ENCODE measurements at regions of chr6 and their contacts with region 1.

Region 1: GRCh38 chr6:41367700-41368099 is 32.3 kb downstream of the NCR2 start:
- DNase-seq: no peak
- H3K4me3 ChIP-seq: no peak overlapping the region
- CTCF ChIP-seq: peak; percentile 87

Region 2: GRCh38 chr6:40962241-40962640 is 405.5 kb before region 1 on chr6:
- CTCF ChIA-PET with region 1: no interaction called
- POLR2A ChIA-PET with region 1: no interaction called
- DNase-seq: no peak
- H3K4me3 ChIP-seq: no peak overlapping the region
- CTCF ChIP-seq: no peak

Region 3: DNA sequence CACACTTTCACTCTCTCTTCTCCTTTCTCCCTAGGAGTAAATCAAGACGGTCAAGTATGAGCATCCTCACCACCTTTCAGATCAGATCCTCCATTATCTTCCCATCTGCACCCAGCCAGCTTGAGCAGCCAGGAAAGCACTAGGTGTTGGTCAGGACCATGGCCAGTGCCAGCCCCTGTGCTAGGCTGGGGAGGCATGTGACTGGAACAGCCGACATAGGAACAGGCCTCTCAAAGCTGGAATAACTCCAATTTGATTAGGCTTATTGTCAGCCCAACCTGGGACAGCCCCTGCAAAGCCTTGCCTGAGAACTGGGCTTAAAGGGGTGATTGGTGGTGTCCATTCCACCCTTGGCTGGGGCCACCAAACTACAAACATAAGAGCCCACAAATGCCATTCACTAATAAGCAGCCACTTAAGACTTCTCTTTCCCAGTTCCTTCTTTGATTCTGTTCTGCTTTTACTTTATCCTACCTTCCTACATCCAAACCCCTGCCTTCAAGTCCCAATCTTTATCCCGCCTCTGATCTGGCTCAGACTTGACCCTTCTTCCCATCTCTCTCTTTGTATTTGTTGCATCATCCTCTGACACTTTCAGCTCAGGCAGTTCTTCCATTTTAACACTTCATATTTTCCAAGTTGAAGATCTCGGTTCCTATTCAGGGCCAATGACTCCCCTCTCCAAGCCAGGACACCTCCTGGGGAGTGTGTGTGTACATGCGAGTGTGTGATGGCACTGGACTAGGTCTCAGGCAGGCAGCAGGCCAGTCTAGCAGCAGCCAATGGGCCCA is 200.3 kb before region 1 on chr6:
- CTCF ChIA-PET with region 1: no interaction called
- POLR2A ChIA-PET with region 1: no interaction called
- DNase-seq: no peak
- H3K4me3 ChIP-seq: no peak overlapping the region
- CTCF ChIP-seq: no peak

Region 4: GRCh38 chr6:41392246-41392645 is 24.5 kb after region 1 on chr6:
- CTCF ChIA-PET with region 1: interaction called, 12 read pairs
- POLR2A ChIA-PET with region 1: no interaction called
- DNase-seq: no peak
- H3K4me3 ChIP-seq: no peak overlapping the region
- CTCF ChIP-seq: no peak

Region 5: GRCh38 chr6:41581381-41581991 is 213.8 kb after region 1 on chr6:
- CTCF ChIA-PET with region 1: interaction called, 53 read pairs
- POLR2A ChIA-PET with region 1: no interaction called
- DNase-seq: no peak
- H3K4me3 ChIP-seq: no peak overlapping the region
- CTCF ChIP-seq: no peak

Region 6: GRCh38 chr6:41655711-41656691 is 288.3 kb after region 1 on chr6:
- CTCF ChIA-PET with region 1: interaction called, 17 read pairs
- POLR2A ChIA-PET with region 1: no interaction called
- DNase-seq: peak; percentile 12
- H3K4me3 ChIP-seq: no peak overlapping the region
- CTCF ChIP-seq: no peak

Region 7: DNA sequence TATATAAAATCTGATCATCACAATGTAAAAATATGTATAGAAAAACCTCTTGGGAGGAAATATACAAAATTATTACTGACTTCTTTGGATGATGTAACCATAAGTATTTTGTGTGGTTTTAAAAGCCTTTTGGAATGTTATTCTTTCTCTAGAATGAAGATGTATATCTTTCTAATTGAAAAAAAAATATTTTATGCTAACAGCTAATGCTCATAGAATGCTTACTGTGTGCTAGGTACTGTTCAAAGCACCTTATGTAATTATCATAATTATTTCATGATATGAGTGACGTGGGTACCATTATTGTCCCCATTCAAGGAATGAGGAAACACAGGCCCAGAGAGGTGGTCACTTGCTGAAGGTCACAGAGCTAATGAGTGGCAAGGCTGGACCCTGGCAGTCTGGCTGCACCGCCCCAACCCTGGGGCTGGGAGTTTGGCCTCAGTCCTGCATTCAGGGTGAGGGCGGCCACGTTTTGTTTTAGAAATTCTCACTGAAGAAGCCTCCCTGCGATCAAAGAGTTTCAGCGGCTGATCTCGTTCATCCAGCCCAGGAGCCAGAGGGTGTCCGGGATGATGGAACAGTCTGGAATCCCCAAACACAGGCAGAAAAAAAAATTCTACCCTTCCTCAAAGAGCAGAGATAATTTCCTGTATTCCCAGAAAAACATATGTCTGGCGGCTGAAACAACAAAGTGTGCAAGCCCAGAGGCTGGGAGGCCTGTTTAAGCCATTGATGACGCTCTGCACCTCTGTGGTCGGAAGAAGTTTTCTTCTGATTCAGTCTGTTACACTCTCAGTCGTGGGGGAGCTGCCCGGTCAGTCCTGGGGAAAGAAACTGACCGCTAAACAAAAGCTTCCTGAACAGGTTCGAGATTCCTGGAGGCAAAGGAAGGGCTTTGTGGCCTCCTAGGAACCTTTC is 330.4 kb after region 1 on chr6:
- CTCF ChIA-PET with region 1: interaction called, 414 read pairs
- POLR2A ChIA-PET with region 1: no interaction called
- DNase-seq: peak; percentile 95
- H3K4me3 ChIP-seq: peak overlapping the region; percentile 13
- CTCF ChIP-seq: no peak

Region 8: GRCh38 chr6:41775293-41776181 is 407.8 kb after region 1 on chr6:
- CTCF ChIA-PET with region 1: interaction called, 90 read pairs
- POLR2A ChIA-PET with region 1: no interaction called
- DNase-seq: no peak
- H3K4me3 ChIP-seq: no peak overlapping the region
- CTCF ChIP-seq: peak; percentile 89

Region 9: GRCh38 chr6:41859356-41859755 is 491.7 kb after region 1 on chr6:
- CTCF ChIA-PET with region 1: no interaction called
- POLR2A ChIA-PET with region 1: no interaction called
- DNase-seq: no peak
- H3K4me3 ChIP-seq: no peak overlapping the region
- CTCF ChIP-seq: no peak